ENCODE measurements at regions of chr1 and their contacts with region 1.

Region 1: GRCh38 chr1:156090822-156091188 is 8.5 kb upstream of the MEX3A start:
- DNase-seq: peak; percentile 91
- H3K4me3 ChIP-seq: no peak overlapping the region
- H3K27ac ChIP-seq: no peak overlapping the region
- H3K4me1 ChIP-seq: peaks cover 0 to 10% (median 1%) of the 10 kb centered on the region in 4 donors
- H3K27me3 ChIP-seq: no peaks in the 10 kb centered on the region
- CTCF ChIP-seq: peak; percentile 82 to 88 (median 87)
- EP300 ChIP-seq: no peak
- POLR2A ChIP-seq: no peak

Region 2: DNA sequence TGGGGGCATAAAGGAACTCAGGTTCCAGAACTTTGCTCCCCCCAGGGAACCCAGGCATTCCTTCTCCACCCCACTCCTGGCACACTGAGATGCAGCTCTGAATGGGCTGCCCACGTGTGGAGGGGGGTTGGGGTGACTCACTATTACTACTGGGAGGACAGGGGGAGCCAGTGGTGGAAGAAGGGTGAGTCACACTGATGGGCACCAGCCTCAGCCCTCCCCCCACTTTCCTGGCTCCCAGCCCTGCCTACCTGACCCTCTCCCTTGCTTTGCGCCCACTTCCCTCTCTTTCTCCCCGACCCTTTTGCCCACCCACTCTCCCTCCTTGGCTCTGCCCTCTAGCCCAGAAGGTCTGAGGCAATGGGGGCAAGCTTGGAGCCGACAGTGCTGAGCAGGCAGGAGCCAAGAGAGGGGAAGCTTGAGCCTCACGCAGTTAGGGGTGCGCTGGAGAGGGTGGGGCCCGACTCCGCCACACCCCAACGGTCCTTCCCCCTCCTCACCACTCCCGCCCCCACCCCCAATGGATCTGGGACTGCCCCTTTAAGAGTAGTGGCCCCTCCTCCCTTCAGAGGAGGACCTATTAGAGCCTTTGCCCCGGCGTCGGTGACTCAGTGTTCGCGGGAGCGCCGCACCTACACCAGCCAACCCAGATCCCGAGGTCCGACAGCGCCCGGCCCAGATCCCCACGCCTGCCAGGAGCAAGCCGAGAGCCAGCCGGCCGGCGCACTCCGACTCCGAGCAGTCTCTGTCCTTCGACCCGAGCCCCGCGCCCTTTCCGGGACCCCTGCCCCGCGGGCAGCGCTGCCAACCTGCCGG is 23.5 kb after region 1 on chr1 and contains the start of gene LMNA:
- in situ Hi-C with region 1: no loop called
- intact Hi-C with region 1: no loop called
- DNase-seq: peak; percentile 94
- H3K4me3 ChIP-seq: peak within 1 kb of the TSS; percentile 76 to 99 (median 84)
- H3K27ac ChIP-seq: peak within 1 kb of the TSS; percentile 96 to 100 (median 98)
- H3K4me1 ChIP-seq: peaks cover 5 to 53% (median 46%) of the 10 kb centered on the region in 4 donors
- H3K27me3 ChIP-seq: no peaks in the 10 kb centered on the region
- CTCF ChIP-seq: no peak
- EP300 ChIP-seq: no peak
- POLR2A ChIP-seq: peak; percentile 99
- total RNA-seq, gene LMNA: 300 to 999 (median 324) TPM

Region 3: DNA sequence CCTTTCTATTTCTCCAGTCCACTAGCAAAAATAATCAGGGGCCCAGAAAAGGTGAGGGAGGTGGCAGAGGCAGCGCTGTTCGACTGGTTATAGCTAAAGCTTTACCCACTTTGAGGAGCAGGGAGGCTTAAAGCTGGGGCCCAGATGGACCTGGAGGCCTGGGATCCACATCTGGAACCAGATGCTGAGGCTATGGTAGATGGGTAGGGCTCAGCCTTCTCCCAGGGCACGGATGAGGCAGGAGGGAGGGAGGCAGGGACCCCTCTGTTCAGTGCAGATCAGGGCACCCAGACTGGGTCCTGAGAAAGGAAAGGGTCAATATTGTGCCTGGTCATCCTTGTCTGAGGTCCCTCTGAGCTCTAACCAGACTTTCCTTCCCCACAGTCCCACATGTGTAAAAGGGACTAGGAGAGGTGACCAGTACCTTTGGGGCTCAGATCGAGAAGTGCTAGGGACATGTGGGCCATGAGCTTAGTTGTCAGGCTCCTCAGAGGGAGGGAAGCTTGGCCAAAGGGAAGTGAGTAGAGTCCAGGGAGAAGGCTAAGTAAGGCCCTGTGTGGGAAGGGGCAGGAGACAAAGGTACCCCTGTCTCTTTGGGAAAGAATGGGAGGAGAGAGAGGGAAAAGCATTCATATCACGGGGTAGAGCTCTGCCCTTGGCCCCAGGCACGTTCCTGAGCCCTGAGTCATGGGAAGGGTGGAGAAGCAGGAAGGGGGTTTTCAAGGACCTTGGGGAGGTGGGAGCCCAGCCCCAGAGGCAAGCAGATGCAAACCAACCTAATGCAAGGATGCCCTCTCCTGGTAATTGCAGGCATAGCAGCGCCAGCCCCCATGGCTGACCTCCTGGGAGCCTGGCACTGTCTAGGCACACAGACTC is 39.1 kb after region 1 on chr1:
- in situ Hi-C with region 1: loop called in 3 of 4 experiments (anchors 5 kb)
- intact Hi-C with region 1: loop called (anchors 2 kb)
- DNase-seq: peak; percentile 88
- H3K4me3 ChIP-seq: peak overlapping the region in 1 of 4 donors; percentile 18
- H3K27ac ChIP-seq: peak overlapping the region; percentile 96 to 100 (median 98)
- H3K4me1 ChIP-seq: peaks cover 50 to 58% (median 56%) of the 10 kb centered on the region in 4 donors
- H3K27me3 ChIP-seq: no peaks in the 10 kb centered on the region
- CTCF ChIP-seq: peak; percentile 95 to 99 (median 97)
- EP300 ChIP-seq: no peak
- POLR2A ChIP-seq: peak; percentile 31